ENCODE measurements at regions of chr22 and their contacts with region 1.

Region 1: GRCh38 chr22:40436505-40437451 is 66.4 kb downstream of the SGSM3 start:
- DNase-seq: no peak
- ATAC-seq: peak; percentile 60 to 67

Region 2: GRCh38 chr22:40346178-40347118 is 90.3 kb before region 1 on chr22 and contains the start of gene ADSL:
- intact Hi-C with region 1: no loop called
- DNase-seq: peak; percentile 93
- ATAC-seq: peak; percentile 99
- total RNA-seq, gene ADSL: 37.4 to 47.0 TPM

Region 3: GRCh38 chr22:40487663-40488249 is 51.0 kb after region 1 on chr22:
- intact Hi-C with region 1: loop called in 1 of 2 experiments (anchors 5 kb)
- DNase-seq: no peak
- ATAC-seq: no peak

Region 4: GRCh38 chr22:40541300-40541699 is 104.5 kb after region 1 on chr22:
- intact Hi-C with region 1: loop called in 1 of 2 experiments (anchors 10 kb)
- DNase-seq: no peak
- ATAC-seq: no peak

Region 5: DNA sequence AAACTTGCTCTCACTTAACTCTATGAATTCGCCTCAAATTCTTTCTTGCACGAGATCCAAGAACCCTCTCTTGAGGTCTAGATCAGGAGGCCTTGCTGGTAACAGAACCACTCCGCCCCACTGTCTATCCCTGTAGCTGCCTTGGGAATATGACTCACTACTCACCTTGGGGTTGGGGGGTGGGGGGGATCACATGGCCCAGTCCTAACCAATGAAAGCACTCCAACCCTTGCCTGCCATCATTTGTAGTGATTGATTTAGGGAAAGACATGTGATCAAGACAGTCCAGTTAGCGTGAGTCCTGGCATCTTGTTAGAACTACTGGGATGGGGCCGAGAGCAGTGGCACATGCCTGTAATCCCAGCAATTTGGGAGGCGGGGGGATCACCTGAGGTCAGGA is 204.5 kb after region 1 on chr22:
- intact Hi-C with region 1: loop called (anchors 5 kb)
- DNase-seq: no peak
- ATAC-seq: no peak

Measured in left cardiac atrium (tissue), 4 donors.